ENCODE measurements at regions of chr6 and their contacts with region 1.

Region 1: DNA sequence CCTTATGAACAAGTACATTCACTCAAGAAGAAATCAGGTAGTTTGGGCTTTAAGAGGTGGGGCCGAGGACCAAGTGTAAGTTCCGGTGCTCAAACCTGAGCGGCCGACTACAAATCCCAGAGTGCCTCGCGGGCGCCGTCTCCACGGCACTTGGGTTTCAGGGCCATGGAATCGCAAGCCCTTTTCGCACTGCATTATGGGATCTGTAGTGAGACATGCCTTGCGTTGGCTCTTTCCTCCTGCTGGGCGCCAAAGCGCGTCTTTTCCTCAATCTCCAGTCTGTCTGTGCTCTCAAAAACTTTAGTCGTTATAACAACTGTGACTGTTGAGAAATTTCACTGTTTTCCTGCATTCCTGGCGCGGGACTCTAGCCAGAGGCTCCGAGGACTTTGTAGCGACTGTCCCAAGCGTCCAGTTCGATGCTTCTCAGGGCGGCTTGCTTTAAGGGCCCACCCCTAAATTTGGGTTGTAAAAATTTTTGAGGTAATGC is 433 bp upstream of the FBXO9 start:
- DNase-seq: peak; percentile 98
- ATAC-seq: peak; percentile 84
- H3K4me3 Mint-ChIP-seq: peak overlapping the region; percentile 97
- H3K27ac Mint-ChIP-seq: peak overlapping the region; percentile 100
- H3K4me1 Mint-ChIP-seq: peaks cover 55% of the 10 kb centered on the region
- H3K27me3 Mint-ChIP-seq: no peaks in the 10 kb centered on the region

Region 2: GRCh38 chr6:52612336-52613054 is 452.3 kb before region 1 on chr6:
- CTCF ChIA-PET with region 1: no interaction called
- POLR2A ChIA-PET with region 1: no interaction called
- intact Hi-C with region 1: no loop called
- DNase-seq: no peak
- ATAC-seq: no peak
- H3K4me3 Mint-ChIP-seq: no peak overlapping the region
- H3K27ac Mint-ChIP-seq: no peak overlapping the region
- H3K4me1 Mint-ChIP-seq: no peaks in the 10 kb centered on the region
- H3K27me3 Mint-ChIP-seq: peaks cover 8% of the 10 kb centered on the region

Region 3: GRCh38 chr6:52664186-52664990 is 400.4 kb before region 1 on chr6:
- CTCF ChIA-PET with region 1: no interaction called
- POLR2A ChIA-PET with region 1: no interaction called
- intact Hi-C with region 1: loop called in 1 of 2 experiments (anchors 2 kb)
- DNase-seq: peak; percentile 86
- ATAC-seq: peak; percentile 99
- H3K4me3 Mint-ChIP-seq: no peak overlapping the region
- H3K27ac Mint-ChIP-seq: no peak overlapping the region
- H3K4me1 Mint-ChIP-seq: peaks cover 11% of the 10 kb centered on the region
- H3K27me3 Mint-ChIP-seq: no peaks in the 10 kb centered on the region

Region 4: GRCh38 chr6:52881996-52882841 is 182.6 kb before region 1 on chr6:
- CTCF ChIA-PET with region 1: interaction called, 3 read pairs
- POLR2A ChIA-PET with region 1: no interaction called
- intact Hi-C with region 1: loop called in 1 of 2 experiments (anchors 2 kb)
- DNase-seq: peak; percentile 77
- ATAC-seq: peak; percentile 98
- H3K4me3 Mint-ChIP-seq: peak overlapping the region; percentile 73
- H3K27ac Mint-ChIP-seq: peak overlapping the region; percentile 81
- H3K4me1 Mint-ChIP-seq: peaks cover 8% of the 10 kb centered on the region
- H3K27me3 Mint-ChIP-seq: no peaks in the 10 kb centered on the region

Region 5: DNA sequence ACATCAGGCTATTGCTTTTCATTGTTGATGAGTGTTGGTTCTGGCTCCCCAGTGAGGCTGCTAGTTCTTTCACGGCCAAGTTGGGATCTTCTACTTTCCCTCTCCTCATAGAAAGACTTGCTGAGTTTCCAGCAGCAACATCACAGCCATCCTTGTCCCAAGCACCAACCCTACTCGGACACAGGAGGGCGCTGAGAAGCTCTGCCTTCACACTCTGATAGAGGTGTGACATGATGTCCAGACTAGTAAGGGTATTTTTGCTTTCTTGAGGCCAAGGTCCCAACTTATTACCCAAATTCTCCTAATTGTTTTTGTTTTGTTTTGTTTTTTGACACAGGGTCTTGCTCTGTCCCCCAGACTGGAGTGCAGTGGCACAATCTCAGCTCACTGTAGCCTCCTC is 86.9 kb after region 1 on chr6:
- CTCF ChIA-PET with region 1: no interaction called
- POLR2A ChIA-PET with region 1: no interaction called
- intact Hi-C with region 1: no loop called
- DNase-seq: peak; percentile 40
- ATAC-seq: peak; percentile 47
- H3K4me3 Mint-ChIP-seq: no peak overlapping the region
- H3K27ac Mint-ChIP-seq: no peak overlapping the region
- H3K4me1 Mint-ChIP-seq: no peaks in the 10 kb centered on the region
- H3K27me3 Mint-ChIP-seq: peaks cover 3% of the 10 kb centered on the region

Region 6: GRCh38 chr6:53244958-53245357 is 180.2 kb after region 1 on chr6:
- CTCF ChIA-PET with region 1: no interaction called
- POLR2A ChIA-PET with region 1: no interaction called
- intact Hi-C with region 1: no loop called
- DNase-seq: peak; percentile 44
- ATAC-seq: peak; percentile 76
- H3K4me3 Mint-ChIP-seq: no peak overlapping the region
- H3K27ac Mint-ChIP-seq: no peak overlapping the region
- H3K4me1 Mint-ChIP-seq: peaks cover 24% of the 10 kb centered on the region
- H3K27me3 Mint-ChIP-seq: no peaks in the 10 kb centered on the region